Activated CD4-positive, alpha-beta memory T cell treated with anti-CD3 and anti-CD28 coated beads for 36 hours (primary cell): ENCODE measurements at regions of chr3 and their contacts with region 1.

Region 1: GRCh38 chr3:169764452-169765274 is at the start of gene TERC:
- DNase-seq: peak; percentile 95
- H3K4me3 Mint-ChIP-seq: peak within 1 kb of the TSS; percentile 96
- H3K27ac Mint-ChIP-seq: peak within 1 kb of the TSS; percentile 99
- H3K4me1 Mint-ChIP-seq: peaks cover 22% of the 10 kb centered on the region
- H3K27me3 Mint-ChIP-seq: no peaks in the 10 kb centered on the region
- total RNA-seq, gene TERC: 11.5 to 19.2 TPM

Region 2: DNA sequence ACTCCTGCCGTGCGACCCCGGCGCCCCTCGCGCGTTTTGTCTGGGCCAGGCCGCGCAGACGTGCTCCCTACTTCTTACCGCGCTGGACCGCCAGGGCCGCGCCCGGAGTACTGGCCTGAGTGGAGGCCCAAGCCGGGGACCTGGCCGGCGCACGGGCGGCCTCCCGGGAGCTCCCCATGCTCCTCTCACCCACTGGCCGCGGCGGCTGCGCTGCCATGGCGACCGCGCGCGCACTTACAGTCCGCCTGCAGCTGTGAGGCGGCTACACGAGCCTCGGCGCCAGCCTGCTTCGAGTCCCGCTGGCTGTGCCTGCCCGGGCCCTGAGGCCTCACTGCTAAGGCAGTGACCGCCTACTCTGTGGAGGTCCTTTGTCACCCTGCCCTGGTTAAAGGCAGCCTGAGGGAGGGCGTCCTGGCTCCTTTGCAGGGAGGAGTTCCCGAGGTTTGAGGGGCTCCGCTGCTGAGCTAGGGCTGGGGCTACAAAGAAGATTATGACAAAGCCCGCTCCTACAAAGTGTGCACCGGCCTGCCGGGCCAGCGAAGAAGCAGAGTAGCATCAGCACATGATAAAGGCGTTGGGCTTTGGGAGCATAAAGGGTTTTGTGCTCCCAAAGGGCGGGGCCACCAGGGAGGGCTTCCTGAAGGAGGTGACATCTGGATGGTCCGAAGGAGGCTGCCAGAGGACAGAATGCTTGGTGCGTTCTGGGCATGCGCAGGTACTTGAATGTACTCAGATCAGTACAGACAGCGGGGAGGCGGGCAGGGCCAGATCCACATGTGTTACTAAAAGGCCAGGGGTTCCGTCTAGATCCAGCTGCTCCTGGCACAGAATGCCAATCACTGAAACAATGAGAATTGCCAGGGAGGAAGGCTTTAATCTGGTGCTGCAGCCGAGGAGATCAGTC is 47.9 kb after region 1 on chr3 and contains the starts of genes LRRC34 and LRRIQ4:
- CTCF ChIA-PET with region 1: interaction called, 3 read pairs
- POLR2A ChIA-PET with region 1: interaction called, 4 read pairs
- intact Hi-C with region 1: loop called (anchors 1 kb)
- DNase-seq: peak; percentile 88
- H3K4me3 Mint-ChIP-seq: peak within 1 kb of the TSS; percentile 75
- H3K27ac Mint-ChIP-seq: peak within 1 kb of the TSS; percentile 43
- H3K4me1 Mint-ChIP-seq: peaks cover 19% of the 10 kb centered on the region
- H3K27me3 Mint-ChIP-seq: no peaks in the 10 kb centered on the region
- total RNA-seq, gene LRRC34: 2.8 to 2.9 TPM
- total RNA-seq, gene LRRIQ4: 0.14 TPM in 1 of 2 experiments, not detected in the other

Region 3: GRCh38 chr3:169966428-169966950 is 201.8 kb after region 1 on chr3 and contains the start of gene SEC62:
- CTCF ChIA-PET with region 1: interaction called, 7 read pairs
- POLR2A ChIA-PET with region 1: interaction called, 8 read pairs
- intact Hi-C with region 1: loop called (anchors 2 kb)
- DNase-seq: peak; percentile 97
- H3K4me3 Mint-ChIP-seq: peak within 1 kb of the TSS; percentile 80
- H3K27ac Mint-ChIP-seq: peak within 1 kb of the TSS; percentile 96
- H3K4me1 Mint-ChIP-seq: peaks cover 59% of the 10 kb centered on the region
- H3K27me3 Mint-ChIP-seq: no peaks in the 10 kb centered on the region
- total RNA-seq, gene SEC62: 59.7 to 60.7 TPM

Region 4: DNA sequence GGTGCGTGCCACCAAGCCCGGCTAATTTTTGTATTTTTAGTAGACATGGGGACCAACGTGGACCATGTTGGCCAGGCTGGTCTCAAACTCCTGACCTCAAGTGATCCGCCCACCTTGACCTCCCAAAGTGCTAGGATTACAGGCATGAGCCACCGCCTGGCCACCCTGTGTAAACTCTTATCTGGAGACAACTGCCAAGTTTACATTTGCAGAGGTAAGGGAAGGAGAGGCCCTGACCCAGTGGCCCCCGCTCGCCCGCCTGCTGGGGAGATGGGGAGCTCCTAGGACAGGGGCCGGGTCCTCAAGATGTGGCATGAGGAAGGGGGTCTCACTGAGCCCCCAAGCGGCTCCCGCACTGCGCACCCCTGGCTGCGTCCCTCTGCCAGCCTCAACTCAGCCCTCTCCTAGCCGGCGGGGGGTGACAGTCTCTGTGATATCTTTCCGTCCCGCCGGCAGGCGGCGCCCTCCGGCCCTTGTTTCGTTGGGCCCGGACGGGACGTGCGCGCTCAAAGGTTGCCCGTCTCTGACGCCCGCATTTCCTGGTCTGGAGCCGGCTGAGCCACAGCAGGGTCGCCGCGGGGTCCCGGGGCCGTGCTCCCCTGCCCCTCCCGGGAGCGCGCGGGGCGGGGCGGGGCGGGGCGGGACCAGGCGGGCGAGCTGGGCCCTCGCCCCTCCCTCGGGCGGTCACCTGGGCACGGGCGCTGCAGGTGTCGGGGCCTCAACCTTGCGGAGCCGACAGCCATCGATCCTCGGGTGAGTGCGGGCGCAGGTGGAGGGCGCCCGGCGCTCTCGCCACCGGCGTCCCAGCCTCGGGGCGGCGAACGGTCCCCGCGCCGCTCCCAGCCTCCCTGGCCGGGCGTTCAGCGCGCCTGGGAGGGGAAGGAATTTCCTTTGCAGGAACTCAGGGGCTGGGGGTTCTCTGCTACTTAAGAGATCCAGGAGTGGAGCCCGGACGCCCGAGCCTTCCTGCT is 273.1 kb after region 1 on chr3 and contains the start of gene GPR160:
- CTCF ChIA-PET with region 1: no interaction called
- POLR2A ChIA-PET with region 1: no interaction called
- intact Hi-C with region 1: loop called (anchors 5 kb)
- DNase-seq: peak; percentile 89
- H3K4me3 Mint-ChIP-seq: peak within 1 kb of the TSS; percentile 82
- H3K27ac Mint-ChIP-seq: no peak within 1 kb of the TSS
- H3K4me1 Mint-ChIP-seq: peaks cover 14% of the 10 kb centered on the region
- H3K27me3 Mint-ChIP-seq: no peaks in the 10 kb centered on the region
- total RNA-seq, gene GPR160: 5.7 to 7.0 TPM

Region 5: GRCh38 chr3:170357176-170357919 is 592.7 kb after region 1 on chr3 and contains the start of gene SKIL:
- CTCF ChIA-PET with region 1: no interaction called
- POLR2A ChIA-PET with region 1: no interaction called
- intact Hi-C with region 1: loop called (anchors 1 kb)
- DNase-seq: peak; percentile 96
- H3K4me3 Mint-ChIP-seq: peak within 1 kb of the TSS; percentile 77
- H3K27ac Mint-ChIP-seq: peak within 1 kb of the TSS; percentile 94
- H3K4me1 Mint-ChIP-seq: peaks cover 42% of the 10 kb centered on the region
- H3K27me3 Mint-ChIP-seq: no peaks in the 10 kb centered on the region
- total RNA-seq, gene SKIL: 20.9 to 22.7 TPM